OCI-LY7 (cell line): ENCODE measurements at regions of chr2 and their contacts with region 1.

Region 1: GRCh38 chr2:119476301-119477021 is 44.8 kb downstream of the TMEM37 start:
- DNase-seq: peak; percentile 68
- H3K4me3 ChIP-seq: no peak overlapping the region
- H3K27ac ChIP-seq: no peak overlapping the region
- H3K4me1 ChIP-seq: peaks cover 3% of the 10 kb centered on the region
- CTCF ChIP-seq: peak; percentile 98

Region 2: DNA sequence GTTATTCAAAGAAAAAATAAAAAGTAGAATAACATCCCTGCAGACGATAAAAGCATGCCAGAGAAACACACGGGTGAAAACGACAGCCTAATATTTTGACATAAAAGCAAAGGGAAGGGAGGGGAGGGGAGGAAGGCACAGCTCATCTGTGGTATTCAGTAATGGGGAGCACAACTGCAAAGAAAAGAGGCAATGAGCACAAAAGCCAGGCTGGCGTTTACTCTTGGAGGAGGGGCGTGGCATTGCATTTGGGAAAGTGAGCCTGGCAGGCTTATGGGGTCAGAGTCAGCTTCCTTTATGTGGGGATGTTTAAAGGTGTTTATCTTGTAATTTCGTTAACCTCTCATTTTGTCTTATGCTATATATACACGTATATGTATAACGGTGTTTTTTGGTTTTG is 199.6 kb before region 1 on chr2:
- CTCF ChIA-PET with region 1: no interaction called
- POLR2A ChIA-PET with region 1: no interaction called
- intact Hi-C with region 1: no loop called
- DNase-seq: no peak
- H3K4me3 ChIP-seq: no peak overlapping the region
- H3K27ac ChIP-seq: no peak overlapping the region
- H3K4me1 ChIP-seq: no peaks in the 10 kb centered on the region
- CTCF ChIP-seq: no peak

Region 3: GRCh38 chr2:119407430-119408220 is 68.8 kb before region 1 on chr2:
- CTCF ChIA-PET with region 1: interaction called, 6 read pairs
- POLR2A ChIA-PET with region 1: interaction called, 3 read pairs
- intact Hi-C with region 1: loop called (anchors 1 kb)
- DNase-seq: peak; percentile 73
- H3K4me3 ChIP-seq: no peak overlapping the region
- H3K27ac ChIP-seq: no peak overlapping the region
- H3K4me1 ChIP-seq: peaks cover 21% of the 10 kb centered on the region
- CTCF ChIP-seq: peak; percentile 85